AG04449 (cell line): ENCODE measurements at regions of chr7 and their contacts with region 1.

Region 1: DNA sequence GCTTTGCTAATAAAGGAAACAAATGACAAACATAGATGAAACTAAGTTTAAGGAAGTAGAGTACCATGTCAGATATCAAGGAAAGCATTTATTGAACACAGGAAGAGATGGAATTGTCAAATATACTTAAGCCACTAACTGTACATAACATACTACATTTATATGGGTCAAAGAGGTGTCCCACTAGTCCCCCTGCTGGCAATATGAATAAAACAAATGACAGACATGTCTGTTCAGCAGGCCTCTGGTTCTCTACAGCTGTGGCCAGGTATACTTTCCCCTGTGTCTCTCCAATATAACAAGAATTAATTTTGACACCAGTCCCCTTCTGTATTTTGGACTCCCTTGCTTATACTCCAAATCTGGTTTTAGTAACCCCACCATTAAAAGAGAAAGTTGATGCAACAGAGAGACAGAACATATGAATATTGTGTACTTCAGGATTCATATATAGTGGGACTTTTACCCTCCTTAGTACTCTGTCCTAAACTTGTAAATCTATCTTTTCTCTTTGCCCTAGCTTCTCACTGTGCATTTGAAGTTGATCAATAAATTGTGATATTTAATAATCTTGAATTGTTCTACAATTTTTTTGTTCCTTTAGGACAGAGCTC is 42.9 kb downstream of the CD36 start:
- DNase-seq: no peak
- H3K4me3 ChIP-seq: no peak overlapping the region
- CTCF ChIP-seq: peak; percentile 39

Region 2: GRCh38 chr7:80584778-80585177 is 96.6 kb before region 1 on chr7:
- CTCF ChIA-PET with region 1: no interaction called
- POLR2A ChIA-PET with region 1: no interaction called
- DNase-seq: peak; percentile 24
- H3K4me3 ChIP-seq: no peak overlapping the region
- CTCF ChIP-seq: no peak

Region 3: GRCh38 chr7:80634505-80634904 is 46.9 kb before region 1 on chr7:
- CTCF ChIA-PET with region 1: no interaction called
- POLR2A ChIA-PET with region 1: no interaction called
- DNase-seq: peak; percentile 66
- H3K4me3 ChIP-seq: no peak overlapping the region
- CTCF ChIP-seq: no peak

Region 4: DNA sequence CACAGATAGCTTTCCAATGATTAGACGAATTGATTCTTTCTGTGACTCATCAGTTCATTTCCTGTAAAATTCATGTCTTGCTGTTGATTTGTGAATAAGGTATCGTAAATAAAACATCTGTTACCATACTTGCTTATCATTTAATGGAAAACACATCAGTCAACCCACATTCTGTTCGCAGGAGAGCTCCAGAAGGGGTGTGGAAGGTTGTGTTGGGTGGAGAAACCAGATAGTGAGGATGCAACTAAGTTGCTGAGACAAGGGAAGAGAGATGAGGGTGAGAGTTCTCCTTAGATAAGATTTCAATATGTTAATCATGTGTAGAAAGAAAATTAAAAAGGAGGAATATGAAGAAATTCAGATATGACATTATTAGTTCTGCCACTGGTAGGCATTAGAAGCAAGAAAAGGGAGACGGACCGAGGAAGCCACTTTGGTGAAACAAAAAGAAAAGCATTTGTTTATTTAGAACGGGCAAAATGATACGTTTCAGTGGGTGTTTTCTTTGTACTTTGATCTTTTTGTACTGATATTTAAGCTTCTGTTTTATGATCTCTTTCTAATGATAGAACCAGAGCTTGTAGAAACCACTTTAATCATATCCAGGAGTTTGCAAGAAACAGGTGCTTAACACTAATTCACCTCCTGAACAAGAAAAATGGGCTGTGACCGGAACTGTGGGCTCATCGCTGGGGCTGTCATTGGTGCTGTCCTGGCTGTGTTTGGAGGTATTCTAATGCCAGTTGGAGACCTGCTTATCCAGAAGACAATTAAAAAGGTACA is 35.1 kb before region 1 on chr7:
- CTCF ChIA-PET with region 1: no interaction called
- POLR2A ChIA-PET with region 1: no interaction called
- DNase-seq: no peak
- H3K4me3 ChIP-seq: no peak overlapping the region
- CTCF ChIP-seq: no peak

Region 5: GRCh38 chr7:80659120-80660055 is 22.0 kb before region 1 on chr7:
- CTCF ChIA-PET with region 1: interaction called, 46 read pairs
- POLR2A ChIA-PET with region 1: no interaction called
- DNase-seq: no peak
- H3K4me3 ChIP-seq: no peak overlapping the region
- CTCF ChIP-seq: peak; percentile 26

Region 6: DNA sequence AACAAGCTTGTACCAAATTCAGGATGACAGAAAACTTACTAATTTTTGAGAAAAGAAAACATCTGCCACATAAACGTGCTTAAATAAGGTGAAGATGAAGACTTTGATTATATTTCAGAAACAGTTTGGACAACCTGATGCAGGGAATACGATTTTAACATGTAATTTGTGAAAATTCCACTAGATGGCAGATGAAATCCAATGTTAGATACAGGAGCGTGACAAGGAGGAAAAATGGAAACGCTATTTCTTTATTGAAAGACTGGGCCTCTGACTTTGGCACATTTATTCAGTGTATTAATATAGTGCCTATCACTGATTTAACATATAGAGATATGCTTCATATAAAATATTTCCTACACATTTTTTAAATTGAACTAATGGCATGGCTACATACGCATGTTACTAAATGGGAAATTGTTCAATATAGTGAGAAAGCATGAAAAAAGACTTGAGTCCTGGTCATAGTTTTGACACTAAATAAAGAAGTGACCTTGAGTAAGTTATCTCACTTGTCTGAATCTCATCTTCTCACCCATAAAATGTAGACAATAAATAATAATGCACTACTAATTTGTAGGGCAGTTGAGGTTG is 17.8 kb after region 1 on chr7:
- CTCF ChIA-PET with region 1: interaction called, 23 read pairs
- POLR2A ChIA-PET with region 1: no interaction called
- DNase-seq: no peak
- H3K4me3 ChIP-seq: no peak overlapping the region
- CTCF ChIP-seq: peak; percentile 27

Region 7: DNA sequence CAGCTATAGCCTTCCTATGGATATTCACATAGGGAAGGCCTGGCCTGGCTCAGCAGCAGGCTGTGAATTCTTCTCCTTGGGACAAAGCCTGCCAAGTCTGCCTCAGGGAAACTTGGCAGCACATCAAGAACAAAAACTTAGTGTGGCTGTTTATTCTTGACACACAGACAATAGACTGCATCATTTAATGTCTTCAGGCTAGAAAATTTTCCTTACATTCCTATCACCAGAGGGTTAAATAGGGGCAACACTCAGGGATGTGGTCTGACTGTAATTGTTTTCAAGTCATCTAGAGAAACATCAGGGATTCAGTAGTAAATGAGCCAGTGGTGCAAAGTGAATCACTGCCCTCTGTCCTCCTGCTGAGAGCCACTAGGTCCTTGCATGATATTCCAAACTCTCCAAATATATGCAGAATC is 100.2 kb after region 1 on chr7:
- CTCF ChIA-PET with region 1: no interaction called
- POLR2A ChIA-PET with region 1: no interaction called
- DNase-seq: no peak
- H3K4me3 ChIP-seq: no peak overlapping the region
- CTCF ChIP-seq: no peak